Heart left ventricle (tissue), 16 donors: ENCODE measurements at regions of chr6 and their contacts with region 1.

Region 1: GRCh38 chr6:34248727-34249551 is at the start of gene SMIM29:
- DNase-seq: peak; percentile 97 to 99 (median 97)
- ATAC-seq: peak; percentile 90 to 96 (median 93)
- H3K4me3 ChIP-seq: peak within 1 kb of the TSS; percentile 46 to 96 (median 88)
- H3K27ac ChIP-seq: peak within 1 kb of the TSS; percentile 80 to 96 (median 94)
- H3K4me1 ChIP-seq: peaks cover 0 to 38% (median 26%) of the 10 kb centered on the region in 12 donors
- H3K27me3 ChIP-seq: no peaks in the 10 kb centered on the region
- CTCF ChIP-seq: peak; percentile 86 to 100 (median 97)
- POLR2A ChIP-seq: peak; percentile 24 to 84
- total RNA-seq, gene SMIM29: 18.4 to 37.4 (median 22.6) TPM

Region 2: GRCh38 chr6:34132486-34133185 is 116.3 kb before region 1 on chr6:
- intact Hi-C with region 1: no loop called
- DNase-seq: peak in 2 of 5 donors; percentile 40 to 47
- ATAC-seq: peak in 1 of 4 donors; percentile 48
- H3K4me3 ChIP-seq: no peak overlapping the region
- H3K27ac ChIP-seq: no peak overlapping the region
- H3K4me1 ChIP-seq: no peaks in the 10 kb centered on the region
- H3K27me3 ChIP-seq: peaks cover 0 to 79% (median 17%) of the 10 kb centered on the region in 9 donors
- CTCF ChIP-seq: no peak
- POLR2A ChIP-seq: no peak

Region 3: DNA sequence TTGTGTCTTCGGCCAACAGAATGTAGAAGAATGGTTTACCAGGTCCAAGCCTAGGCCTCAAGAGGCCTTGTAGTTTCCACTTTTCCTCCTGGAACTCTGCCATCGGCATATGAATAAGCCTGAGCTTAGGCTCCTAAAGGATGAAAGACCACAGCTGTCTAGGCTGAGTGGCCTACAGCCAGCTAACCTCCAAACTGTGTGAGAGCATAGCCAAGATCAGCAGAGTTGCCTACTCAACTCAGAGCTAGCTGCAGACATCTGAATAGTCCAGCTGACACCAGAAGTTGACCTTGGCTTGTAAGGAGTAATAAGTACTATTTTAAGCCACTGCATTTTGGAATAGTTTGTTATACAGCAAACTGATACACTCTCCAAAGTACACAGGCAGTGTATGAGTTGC is 52.5 kb after region 1 on chr6:
- intact Hi-C with region 1: loop called in 1 of 10 experiments (anchors 10 kb)
- DNase-seq: peak in 4 of 5 donors; percentile 85 to 89 (median 86)
- ATAC-seq: peak; percentile 87 to 97 (median 94)
- H3K4me3 ChIP-seq: no peak overlapping the region
- H3K27ac ChIP-seq: peak overlapping the region; percentile 6 to 84 (median 68)
- H3K4me1 ChIP-seq: peaks cover 13 to 85% (median 63%) of the 10 kb centered on the region in 12 donors
- H3K27me3 ChIP-seq: no peaks in the 10 kb centered on the region
- CTCF ChIP-seq: no peak
- POLR2A ChIP-seq: no peak

Region 4: GRCh38 chr6:34414999-34415858 is 166.3 kb after region 1 on chr6:
- intact Hi-C with region 1: loop called (anchors 1 to 5 kb)
- DNase-seq: peak in 4 of 5 donors; percentile 48 to 67 (median 61)
- ATAC-seq: peak; percentile 85 to 94 (median 92)
- H3K4me3 ChIP-seq: peak overlapping the region in 1 of 12 donors; percentile 16
- H3K27ac ChIP-seq: peak overlapping the region in 9 of 12 donors; percentile 16 to 78 (median 55)
- H3K4me1 ChIP-seq: peaks cover 0 to 11% (median 8%) of the 10 kb centered on the region in 12 donors
- H3K27me3 ChIP-seq: no peaks in the 10 kb centered on the region
- CTCF ChIP-seq: peak; percentile 64 to 87 (median 80)
- POLR2A ChIP-seq: no peak

Region 5: GRCh38 chr6:34602318-34603111 is 353.6 kb after region 1 on chr6:
- intact Hi-C with region 1: loop called in 1 of 10 experiments (anchors 10 kb)
- DNase-seq: no peak
- ATAC-seq: peak in 2 of 4 donors; percentile 49
- H3K4me3 ChIP-seq: no peak overlapping the region
- H3K27ac ChIP-seq: peak overlapping the region in 4 of 12 donors; percentile 7 to 54 (median 22)
- H3K4me1 ChIP-seq: peaks cover 9 to 55% (median 32%) of the 10 kb centered on the region in 12 donors
- H3K27me3 ChIP-seq: no peaks in the 10 kb centered on the region
- CTCF ChIP-seq: no peak
- POLR2A ChIP-seq: no peak